ENCODE measurements at regions of chr16 and their contacts with region 1.

Region 1: DNA sequence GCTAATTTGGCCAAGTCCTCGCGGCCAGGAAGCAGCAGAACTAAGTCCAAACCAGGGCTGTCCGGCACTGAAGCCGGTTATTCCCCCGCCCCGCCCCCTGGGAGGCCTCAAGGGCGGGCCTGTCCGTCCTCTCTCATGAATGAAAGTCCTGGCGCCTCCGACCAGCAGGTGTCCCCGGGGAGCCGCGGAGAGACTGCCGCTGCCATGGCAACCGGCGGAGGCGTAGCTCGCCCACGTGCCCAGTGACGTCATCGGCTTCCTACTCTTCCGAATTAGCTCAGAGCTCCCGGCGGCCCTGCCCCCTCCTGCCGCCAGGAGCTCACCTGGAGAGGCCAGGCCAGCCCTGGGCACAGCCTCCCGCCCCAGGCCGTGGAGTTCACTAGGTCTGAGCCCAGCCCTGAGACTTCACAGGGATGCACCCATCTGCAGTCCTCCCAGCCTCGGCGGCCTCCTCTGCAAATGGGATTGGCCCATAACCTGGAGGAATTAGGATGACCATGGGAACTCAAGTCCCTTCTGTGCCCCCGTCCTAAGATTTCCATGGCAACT is 1.3 kb downstream of the SPATA2L start:
- DNase-seq: peak; percentile 98
- H3K4me3 Mint-ChIP-seq: peak overlapping the region; percentile 75
- H3K27ac Mint-ChIP-seq: no peak overlapping the region
- H3K4me1 Mint-ChIP-seq: peaks cover 20% of the 10 kb centered on the region
- H3K27me3 Mint-ChIP-seq: no peaks in the 10 kb centered on the region

Region 2: DNA sequence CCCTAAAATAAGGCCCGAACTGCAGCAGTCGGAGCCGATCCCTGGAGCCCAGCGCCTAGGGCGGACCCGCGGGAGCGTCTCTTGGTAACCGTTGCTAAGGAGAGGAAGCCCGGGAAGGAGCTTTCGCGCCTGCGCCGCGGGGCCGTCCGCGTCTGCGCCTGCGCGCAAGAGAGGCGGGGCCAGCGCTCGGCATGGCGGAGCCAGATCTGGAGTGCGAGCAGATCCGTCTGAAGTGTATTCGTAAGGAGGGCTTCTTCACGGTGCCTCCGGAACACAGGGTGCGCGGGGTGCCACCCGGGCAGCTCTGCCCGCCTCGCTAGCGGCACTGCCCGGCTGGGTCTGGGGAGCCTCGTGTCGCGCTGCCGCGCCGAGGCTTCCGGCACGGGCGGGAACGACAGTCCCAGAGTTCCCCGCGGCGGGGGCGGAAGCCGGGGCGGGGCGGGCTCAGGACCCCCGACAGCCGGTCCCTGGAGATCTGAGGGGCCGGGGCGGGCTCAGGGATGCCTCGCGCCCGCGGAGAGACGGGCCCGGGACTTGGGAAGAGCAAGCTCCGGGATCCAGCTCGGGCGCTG is 13.6 kb before region 1 on chr16 and contains the start of gene CDK10:
- CTCF ChIA-PET with region 1: interaction called, 5 read pairs
- intact Hi-C with region 1: loop called (anchors 1 kb)
- DNase-seq: peak; percentile 86
- H3K4me3 Mint-ChIP-seq: peak within 1 kb of the TSS; percentile 92
- H3K27ac Mint-ChIP-seq: peak within 1 kb of the TSS; percentile 89
- H3K4me1 Mint-ChIP-seq: peaks cover 15% of the 10 kb centered on the region
- H3K27me3 Mint-ChIP-seq: no peaks in the 10 kb centered on the region
- total RNA-seq, gene CDK10: 128 to 158 TPM

Region 3: DNA sequence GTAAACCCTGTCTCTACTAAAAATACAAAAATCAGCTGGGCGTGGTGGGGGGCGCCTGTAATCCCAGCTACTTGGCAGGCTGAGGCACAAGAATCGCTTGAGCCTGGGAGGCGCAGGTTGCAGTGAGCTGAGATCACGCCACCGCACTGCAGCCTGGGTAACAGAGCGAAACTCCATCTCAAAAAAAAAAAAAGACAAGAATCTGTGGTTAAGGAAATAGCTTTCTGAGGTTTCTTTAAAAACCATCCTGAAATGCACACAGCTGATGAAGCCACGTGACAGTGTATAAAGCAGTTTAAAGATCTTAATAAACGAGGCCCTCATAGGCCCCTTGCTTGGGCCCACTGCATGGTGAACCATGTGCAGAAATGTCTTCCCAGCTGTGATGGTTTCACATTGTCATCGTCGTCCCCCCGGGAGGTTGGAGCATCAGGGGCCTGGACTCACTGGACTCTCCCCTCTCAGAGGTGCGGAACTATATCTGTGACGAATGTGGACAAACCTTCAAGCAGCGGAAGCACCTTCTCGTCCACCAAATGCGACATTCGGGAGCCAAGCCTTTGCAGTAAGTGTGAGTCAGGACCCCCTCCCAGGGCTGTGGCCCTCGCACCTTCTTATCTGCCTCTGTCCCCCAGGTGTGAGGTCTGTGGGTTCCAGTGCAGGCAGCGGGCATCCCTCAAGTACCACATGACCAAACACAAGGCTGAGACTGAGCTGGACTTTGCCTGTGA is 37.3 kb after region 1 on chr16:
- CTCF ChIA-PET with region 1: interaction called, 4 read pairs
- intact Hi-C with region 1: loop called (anchors 1 kb)
- DNase-seq: peak; percentile 64
- H3K4me3 Mint-ChIP-seq: no peak overlapping the region
- H3K27ac Mint-ChIP-seq: peak overlapping the region; percentile 78
- H3K4me1 Mint-ChIP-seq: peaks cover 22% of the 10 kb centered on the region
- H3K27me3 Mint-ChIP-seq: no peaks in the 10 kb centered on the region

Region 4: GRCh38 chr16:89815639-89816348 is 115.6 kb after region 1 on chr16:
- CTCF ChIA-PET with region 1: interaction called, 4 read pairs
- intact Hi-C with region 1: loop called (anchors 1 kb)
- DNase-seq: no peak
- H3K4me3 Mint-ChIP-seq: peak overlapping the region; percentile 85
- H3K27ac Mint-ChIP-seq: peak overlapping the region; percentile 61
- H3K4me1 Mint-ChIP-seq: peaks cover 36% of the 10 kb centered on the region
- H3K27me3 Mint-ChIP-seq: no peaks in the 10 kb centered on the region

Region 5: GRCh38 chr16:89909777-89910716 is 209.9 kb after region 1 on chr16:
- CTCF ChIA-PET with region 1: interaction called, 11 read pairs
- intact Hi-C with region 1: loop called (anchors 2 kb)
- DNase-seq: peak; percentile 75
- H3K4me3 Mint-ChIP-seq: no peak overlapping the region
- H3K27ac Mint-ChIP-seq: no peak overlapping the region
- H3K4me1 Mint-ChIP-seq: no peaks in the 10 kb centered on the region
- H3K27me3 Mint-ChIP-seq: no peaks in the 10 kb centered on the region

Measured in activated naive CD4-positive, alpha-beta T cell treated with anti-CD3 and anti-CD28 coated beads for 36 hours (primary cell).